ENCODE measurements at regions of chr2 and their contacts with region 1.

Region 1: DNA sequence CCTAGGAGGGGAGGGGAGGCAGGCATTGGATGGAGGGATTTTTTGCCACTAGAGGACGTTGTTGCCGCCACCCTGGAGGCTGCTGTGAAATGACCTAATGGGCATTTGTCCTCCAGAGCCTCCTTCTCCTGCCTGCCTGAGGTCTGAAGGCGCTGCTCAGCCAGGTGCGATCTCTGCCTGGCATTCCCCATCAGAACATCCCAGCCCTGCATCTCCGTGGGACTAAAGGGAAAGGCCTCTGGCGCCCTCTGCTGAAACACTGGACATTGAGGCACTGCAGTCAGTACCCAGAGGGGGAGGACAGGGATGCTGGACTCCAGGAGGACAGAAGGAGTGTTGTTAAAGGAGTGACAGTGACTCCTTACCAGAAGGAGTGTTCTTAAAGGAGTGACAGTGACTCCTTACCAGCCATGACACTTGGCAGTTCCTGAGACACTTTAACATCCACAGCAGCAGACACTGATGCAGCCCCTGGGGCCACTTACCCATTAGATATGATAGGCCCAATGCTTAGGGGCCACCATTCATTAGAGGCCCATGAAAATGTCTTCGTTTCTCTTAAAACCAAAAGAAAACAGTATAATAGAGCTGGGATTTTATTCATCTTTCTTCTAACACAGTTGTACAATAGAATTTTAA is 17.0 kb downstream of the THNSL2 start:
- DNase-seq: peak; percentile 76
- H3K4me3 Mint-ChIP-seq: no peak overlapping the region
- H3K27ac Mint-ChIP-seq: no peak overlapping the region
- H3K4me1 Mint-ChIP-seq: peaks cover 20% of the 10 kb centered on the region
- H3K27me3 Mint-ChIP-seq: peaks cover 1% of the 10 kb centered on the region

Region 2: DNA sequence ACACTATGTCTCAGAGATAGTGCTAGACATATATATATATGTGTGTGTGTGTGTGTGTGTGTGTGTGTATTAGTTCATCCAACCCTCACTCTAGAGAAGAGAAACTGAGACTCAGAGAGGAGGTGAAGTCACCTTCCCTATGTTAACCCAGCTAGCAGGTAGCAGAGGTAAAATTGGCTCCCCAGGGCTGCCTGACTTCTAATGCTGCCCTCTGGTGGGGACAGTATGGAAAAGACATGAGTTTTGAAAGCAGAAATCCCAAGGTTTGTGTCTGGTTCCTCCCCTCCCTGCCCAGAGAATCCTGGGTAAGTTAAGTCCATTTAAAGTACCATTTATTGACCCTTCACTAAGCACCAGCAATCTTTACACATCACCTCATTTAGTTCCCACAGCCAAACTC is 120.7 kb after region 1 on chr2:
- CTCF ChIA-PET with region 1: interaction called, 3 read pairs
- intact Hi-C with region 1: loop called (anchors 1 kb)
- DNase-seq: peak; percentile 34
- H3K4me3 Mint-ChIP-seq: no peak overlapping the region
- H3K27ac Mint-ChIP-seq: no peak overlapping the region
- H3K4me1 Mint-ChIP-seq: no peaks in the 10 kb centered on the region
- H3K27me3 Mint-ChIP-seq: peaks cover 15% of the 10 kb centered on the region

Region 3: DNA sequence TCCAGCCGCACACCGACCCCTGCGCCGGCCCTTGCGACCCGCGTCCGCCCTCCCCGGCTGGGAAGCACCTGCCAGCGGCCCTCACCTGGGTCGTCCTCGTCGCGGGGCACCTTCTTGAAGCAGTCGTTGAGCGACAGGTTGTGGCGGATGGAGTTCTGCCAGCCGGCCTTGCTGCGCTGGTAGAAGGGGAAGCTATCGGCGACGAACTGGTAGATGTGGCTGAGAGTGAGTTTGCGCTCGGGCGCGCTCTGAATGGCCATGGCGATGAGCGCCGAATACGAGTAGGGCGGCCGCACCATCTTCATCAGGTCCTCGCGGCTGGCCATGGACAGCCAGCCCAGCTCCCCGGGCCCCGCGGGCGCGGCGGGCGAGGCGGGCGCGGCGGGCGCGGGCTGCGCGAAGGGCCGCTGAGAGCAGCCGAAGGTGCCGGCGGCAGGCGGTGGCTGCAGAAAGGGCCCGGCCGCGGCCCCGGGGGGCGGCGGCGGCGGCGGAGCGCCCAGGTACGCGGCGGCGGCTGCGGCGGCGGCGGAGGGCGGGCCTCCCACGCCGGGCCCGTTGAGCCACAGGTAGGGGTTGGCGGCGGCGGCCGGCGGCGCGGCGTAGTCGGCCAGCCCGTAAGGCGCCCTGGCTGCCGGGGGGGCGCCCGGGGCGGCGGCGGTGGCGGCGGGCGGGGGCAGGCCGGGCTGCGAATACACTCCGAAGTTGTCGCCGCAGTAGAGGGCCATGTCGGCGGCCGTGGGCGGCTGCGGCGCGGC is 264.8 kb after region 1 on chr2:
- CTCF ChIA-PET with region 1: no interaction called
- intact Hi-C with region 1: loop called (anchors 1 kb)
- DNase-seq: peak; percentile 23
- H3K4me3 Mint-ChIP-seq: peak overlapping the region; percentile 63
- H3K27ac Mint-ChIP-seq: no peak overlapping the region
- H3K4me1 Mint-ChIP-seq: peaks cover 5% of the 10 kb centered on the region
- H3K27me3 Mint-ChIP-seq: peaks cover 59% of the 10 kb centered on the region

Region 4: DNA sequence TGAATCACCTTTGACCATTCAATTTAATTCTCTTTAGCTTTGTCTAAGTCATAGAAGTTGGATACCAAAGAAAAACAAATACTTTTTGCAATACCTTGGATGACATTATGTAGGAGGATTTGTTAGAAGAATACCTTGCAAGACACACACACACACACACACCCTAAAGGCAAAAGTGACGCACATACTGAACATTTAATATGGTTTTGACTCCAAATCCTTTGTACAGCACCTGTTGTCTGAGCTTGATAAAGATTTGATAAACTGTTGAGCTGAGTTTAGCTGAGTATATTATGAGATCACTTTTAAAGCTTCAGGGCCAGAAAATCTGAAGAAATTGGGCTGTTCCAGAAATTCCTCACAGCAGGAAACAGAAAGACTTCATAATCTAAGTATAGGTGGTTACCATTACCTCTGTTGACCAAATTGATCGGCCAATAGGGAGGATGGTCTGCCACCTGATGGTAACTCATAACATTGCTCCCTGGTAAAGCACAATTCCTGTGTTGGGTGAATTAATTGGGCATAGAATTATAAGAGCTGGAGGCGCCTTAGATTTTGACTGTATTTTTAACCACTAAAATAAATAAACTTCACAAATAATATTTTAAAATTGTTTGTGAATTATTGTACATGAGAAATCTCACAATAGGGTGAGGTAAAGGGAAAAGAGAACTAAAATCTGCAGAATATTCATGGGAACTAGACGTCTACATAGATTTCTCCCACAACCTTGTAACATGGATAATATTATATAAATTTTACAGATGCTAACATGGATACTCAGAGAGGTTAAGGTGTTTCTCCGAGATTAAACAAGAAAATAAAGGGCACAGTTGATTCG is 482.4 kb after region 1 on chr2:
- CTCF ChIA-PET with region 1: no interaction called
- intact Hi-C with region 1: loop called (anchors 5 kb)
- DNase-seq: peak; percentile 55
- H3K4me3 Mint-ChIP-seq: no peak overlapping the region
- H3K27ac Mint-ChIP-seq: no peak overlapping the region
- H3K4me1 Mint-ChIP-seq: no peaks in the 10 kb centered on the region
- H3K27me3 Mint-ChIP-seq: no peaks in the 10 kb centered on the region